ENCODE measurements at regions of chr12 and their contacts with region 1.

Region 1: DNA sequence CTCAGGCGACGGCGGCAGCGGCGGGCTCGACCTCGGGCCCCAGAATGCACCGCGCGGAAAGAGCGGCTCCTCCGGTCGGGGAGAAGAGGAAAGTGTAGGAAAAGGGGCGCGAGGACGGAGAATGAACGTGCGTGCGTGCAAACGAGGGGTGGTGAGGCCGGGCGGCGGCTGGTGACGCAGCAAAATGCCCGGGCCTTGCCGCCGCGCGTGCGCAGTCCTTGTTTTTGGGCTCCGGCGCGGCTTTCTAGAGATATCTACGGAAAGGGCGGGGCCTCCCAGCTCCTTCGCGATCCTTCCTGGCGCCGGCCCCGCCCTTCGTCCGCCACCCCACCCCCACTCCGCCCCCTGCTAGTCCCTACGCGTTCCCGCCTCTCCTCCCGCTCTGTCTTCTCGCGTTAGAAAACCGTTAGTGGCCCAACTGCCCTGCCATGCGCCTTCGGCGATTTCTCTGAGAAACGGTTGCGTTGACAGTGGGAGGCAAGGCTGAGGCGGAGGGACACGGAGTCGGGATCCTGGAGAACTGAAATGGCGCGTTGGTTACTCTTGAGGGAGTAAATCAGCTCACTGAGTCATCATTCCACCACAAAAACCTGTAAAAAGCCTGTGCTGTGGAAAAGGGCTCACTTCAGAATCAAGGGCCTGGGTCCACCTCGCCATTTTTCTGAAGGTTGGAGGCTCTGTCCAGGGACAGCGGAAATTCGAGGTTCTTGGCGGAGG is at the start of gene PTGES3:
- DNase-seq: peak; percentile 92
- ATAC-seq: peak; percentile 75
- H3K4me3 ChIP-seq: peak within 1 kb of the TSS; percentile 90
- H3K27ac ChIP-seq: peak within 1 kb of the TSS; percentile 99
- H3K4me1 ChIP-seq: no peaks in the 10 kb centered on the region
- H3K27me3 ChIP-seq: no peaks in the 10 kb centered on the region
- CTCF ChIP-seq: no peak
- EP300 ChIP-seq: peak in 1 of 2 experiments; percentile 47; a peak in 2 of 4 replicates
- POLR2A ChIP-seq: peak; percentile 93
- RAD21 ChIP-seq: no peak
- polyA plus RNA-seq, gene PTGES3: 117 to 186 TPM

Region 2: GRCh38 chr12:56645717-56646446 is 42.4 kb before region 1 on chr12 and contains the start of gene ATP5F1B:
- CTCF ChIA-PET with region 1: interaction called, 3 read pairs
- POLR2A ChIA-PET with region 1: interaction called, 41 read pairs
- RAD21 ChIA-PET with region 1: interaction called, 15 read pairs
- SMC1A ChIA-PET with region 1: interaction called, 12 read pairs
- in situ Hi-C with region 1: no loop called
- intact Hi-C with region 1: no loop called
- DNase-seq: peak; percentile 100
- ATAC-seq: peak; percentile 98
- H3K4me3 ChIP-seq: peak within 1 kb of the TSS; percentile 94
- H3K27ac ChIP-seq: peak within 1 kb of the TSS; percentile 89
- H3K4me1 ChIP-seq: no peaks in the 10 kb centered on the region
- H3K27me3 ChIP-seq: no peaks in the 10 kb centered on the region
- CTCF ChIP-seq: no peak
- EP300 ChIP-seq: no peak
- POLR2A ChIP-seq: peak; percentile 100
- RAD21 ChIP-seq: no peak
- polyA plus RNA-seq, gene ATP5F1B: 671 to 1,479 TPM

Region 3: GRCh38 chr12:56677680-56678079 is 10.6 kb before region 1 on chr12:
- CTCF ChIA-PET with region 1: interaction called, 7 read pairs
- POLR2A ChIA-PET with region 1: interaction called, 15 read pairs
- RAD21 ChIA-PET with region 1: interaction called, 4 read pairs
- SMC1A ChIA-PET with region 1: interaction called, 12 read pairs
- in situ Hi-C with region 1: no loop called
- intact Hi-C with region 1: no loop called
- DNase-seq: no peak
- ATAC-seq: peak; percentile 80
- H3K4me3 ChIP-seq: no peak overlapping the region
- H3K27ac ChIP-seq: peak overlapping the region; percentile 52; the same call in 1 of the 2 replicates
- H3K4me1 ChIP-seq: peaks cover 42% of the 10 kb centered on the region
- H3K27me3 ChIP-seq: no peaks in the 10 kb centered on the region
- CTCF ChIP-seq: no peak
- EP300 ChIP-seq: no peak
- POLR2A ChIP-seq: no peak
- RAD21 ChIP-seq: no peak

Region 4: GRCh38 chr12:56751712-56752598 is 63.7 kb after region 1 on chr12 and contains the start of gene PRIM1:
- CTCF ChIA-PET with region 1: interaction called, 3 read pairs
- POLR2A ChIA-PET with region 1: interaction called, 20 read pairs
- RAD21 ChIA-PET with region 1: no interaction called
- SMC1A ChIA-PET with region 1: interaction called, 18 read pairs
- in situ Hi-C with region 1: no loop called
- intact Hi-C with region 1: loop called (anchors 2 kb)
- DNase-seq: peak; percentile 54
- ATAC-seq: peak; percentile 87
- H3K4me3 ChIP-seq: peak within 1 kb of the TSS; percentile 82
- H3K27ac ChIP-seq: peak within 1 kb of the TSS; percentile 72
- H3K4me1 ChIP-seq: peaks cover 21% of the 10 kb centered on the region
- H3K27me3 ChIP-seq: no peaks in the 10 kb centered on the region
- CTCF ChIP-seq: no peak
- EP300 ChIP-seq: no peak
- POLR2A ChIP-seq: peak; percentile 82
- RAD21 ChIP-seq: no peak
- polyA plus RNA-seq, gene PRIM1: 54.0 to 70.6 TPM

Region 5: GRCh38 chr12:56833776-56834175 is 145.5 kb after region 1 on chr12:
- CTCF ChIA-PET with region 1: no interaction called
- POLR2A ChIA-PET with region 1: no interaction called
- RAD21 ChIA-PET with region 1: no interaction called
- SMC1A ChIA-PET with region 1: no interaction called
- in situ Hi-C with region 1: no loop called
- intact Hi-C with region 1: no loop called
- DNase-seq: no peak
- ATAC-seq: no peak
- H3K4me3 ChIP-seq: no peak overlapping the region
- H3K27ac ChIP-seq: no peak overlapping the region
- H3K4me1 ChIP-seq: no peaks in the 10 kb centered on the region
- H3K27me3 ChIP-seq: no peaks in the 10 kb centered on the region
- CTCF ChIP-seq: no peak
- EP300 ChIP-seq: no peak
- POLR2A ChIP-seq: no peak
- RAD21 ChIP-seq: no peak

Region 6: GRCh38 chr12:56878010-56878339 is 189.7 kb after region 1 on chr12:
- CTCF ChIA-PET with region 1: no interaction called
- POLR2A ChIA-PET with region 1: no interaction called
- RAD21 ChIA-PET with region 1: no interaction called
- SMC1A ChIA-PET with region 1: no interaction called
- in situ Hi-C with region 1: no loop called
- intact Hi-C with region 1: no loop called
- DNase-seq: no peak
- ATAC-seq: no peak
- H3K4me3 ChIP-seq: no peak overlapping the region
- H3K27ac ChIP-seq: no peak overlapping the region
- H3K4me1 ChIP-seq: no peaks in the 10 kb centered on the region
- H3K27me3 ChIP-seq: no peaks in the 10 kb centered on the region
- CTCF ChIP-seq: no peak
- EP300 ChIP-seq: no peak
- POLR2A ChIP-seq: no peak
- RAD21 ChIP-seq: no peak

Region 7: DNA sequence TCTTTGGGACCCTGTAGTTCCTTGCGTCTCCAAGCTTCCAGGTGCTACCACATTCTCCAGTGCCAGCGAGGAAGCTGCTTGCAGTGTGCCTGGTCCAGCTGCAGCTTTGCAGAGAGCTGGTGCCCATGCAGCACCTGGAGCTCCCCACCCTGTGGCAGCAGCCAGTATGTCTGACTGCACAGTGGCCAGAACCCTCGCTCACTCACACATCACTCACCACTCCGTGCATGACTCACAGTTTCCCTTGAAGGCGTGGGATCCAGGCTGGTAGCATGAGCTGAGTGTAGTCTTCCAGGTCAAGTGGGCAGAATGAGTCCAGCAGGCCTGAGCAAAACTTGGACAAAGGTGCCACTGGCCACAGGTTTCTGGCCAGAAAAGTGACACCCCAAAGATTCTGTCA is 212.3 kb after region 1 on chr12:
- CTCF ChIA-PET with region 1: no interaction called
- POLR2A ChIA-PET with region 1: no interaction called
- RAD21 ChIA-PET with region 1: no interaction called
- SMC1A ChIA-PET with region 1: no interaction called
- in situ Hi-C with region 1: no loop called
- intact Hi-C with region 1: no loop called
- DNase-seq: no peak
- ATAC-seq: no peak
- H3K4me3 ChIP-seq: no peak overlapping the region
- H3K27ac ChIP-seq: no peak overlapping the region
- H3K4me1 ChIP-seq: no peaks in the 10 kb centered on the region
- H3K27me3 ChIP-seq: no peaks in the 10 kb centered on the region; a peak in 1 of 4 replicates
- CTCF ChIP-seq: no peak
- EP300 ChIP-seq: no peak
- POLR2A ChIP-seq: no peak
- RAD21 ChIP-seq: no peak

Region 8: DNA sequence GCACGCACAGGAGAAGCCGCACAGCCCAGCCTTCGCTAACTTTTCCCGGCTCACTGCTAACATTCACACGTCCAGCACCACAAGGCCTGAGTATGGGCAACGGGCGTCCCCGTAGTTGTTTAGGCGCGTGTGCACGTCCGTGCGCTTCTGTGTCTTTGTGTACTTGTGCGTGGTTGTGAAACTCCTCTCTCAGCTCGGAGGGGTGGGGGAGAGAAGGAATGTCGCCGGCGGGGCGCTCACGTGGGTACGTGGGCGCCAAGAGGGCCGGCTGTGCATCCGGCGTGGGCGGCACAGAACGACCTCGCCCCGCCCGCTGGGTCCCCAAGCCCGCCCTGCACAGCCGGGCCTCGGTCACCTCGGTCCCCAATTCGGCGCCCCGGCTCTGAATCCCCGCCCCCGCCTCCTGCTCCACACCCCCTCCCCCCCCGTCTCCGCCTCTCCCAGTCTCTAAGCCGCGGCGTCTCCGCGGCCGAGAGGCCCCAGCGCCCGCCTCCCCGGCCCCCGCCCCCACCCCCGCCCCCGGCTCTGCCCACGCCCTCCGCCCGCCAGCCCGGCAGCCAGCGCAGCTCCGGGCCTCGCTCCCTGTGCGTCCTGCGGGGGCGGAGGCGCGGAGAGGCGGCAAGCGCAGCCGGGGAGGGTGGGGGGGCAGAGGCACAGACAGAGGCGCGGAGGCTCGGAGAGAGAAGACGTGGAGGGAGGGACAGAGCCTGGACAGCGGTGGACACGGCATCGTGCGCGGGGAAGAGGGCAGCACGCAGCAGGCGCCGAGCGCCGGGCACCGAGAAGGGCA is 400.4 kb after region 1 on chr12 and contains the start of gene NAB2:
- CTCF ChIA-PET with region 1: no interaction called
- POLR2A ChIA-PET with region 1: interaction called, 3 read pairs
- RAD21 ChIA-PET with region 1: interaction called, 4 read pairs
- SMC1A ChIA-PET with region 1: no interaction called
- in situ Hi-C with region 1: no loop called
- intact Hi-C with region 1: loop called (anchors 5 kb)
- DNase-seq: peak; percentile 72
- ATAC-seq: peak; percentile 69
- H3K4me3 ChIP-seq: peak within 1 kb of the TSS; percentile 95
- H3K27ac ChIP-seq: peak within 1 kb of the TSS; percentile 98
- H3K4me1 ChIP-seq: peaks cover 31% of the 10 kb centered on the region
- H3K27me3 ChIP-seq: no peaks in the 10 kb centered on the region
- CTCF ChIP-seq: no peak
- EP300 ChIP-seq: 0 out of 4 replicates have a peak, but pooled peaks of 1 of the 2 experiments have one; percentile 48
- POLR2A ChIP-seq: peak; percentile 82
- RAD21 ChIP-seq: no peak
- polyA plus RNA-seq, gene NAB2: 0.35 to 1.0 TPM

Measured in GM12878 (cell line).